ENCODE measurements at regions of chr6 and their contacts with region 1.

Region 1: GRCh38 chr6:139375232-139376016 is 976 bp upstream of the CITED2 start:
- DNase-seq: peak; percentile 95

Region 2: GRCh38 chr6:139323511-139324300 is 51.7 kb before region 1 on chr6:
- intact Hi-C with region 1: no loop called
- DNase-seq: peak; percentile 89

Region 3: DNA sequence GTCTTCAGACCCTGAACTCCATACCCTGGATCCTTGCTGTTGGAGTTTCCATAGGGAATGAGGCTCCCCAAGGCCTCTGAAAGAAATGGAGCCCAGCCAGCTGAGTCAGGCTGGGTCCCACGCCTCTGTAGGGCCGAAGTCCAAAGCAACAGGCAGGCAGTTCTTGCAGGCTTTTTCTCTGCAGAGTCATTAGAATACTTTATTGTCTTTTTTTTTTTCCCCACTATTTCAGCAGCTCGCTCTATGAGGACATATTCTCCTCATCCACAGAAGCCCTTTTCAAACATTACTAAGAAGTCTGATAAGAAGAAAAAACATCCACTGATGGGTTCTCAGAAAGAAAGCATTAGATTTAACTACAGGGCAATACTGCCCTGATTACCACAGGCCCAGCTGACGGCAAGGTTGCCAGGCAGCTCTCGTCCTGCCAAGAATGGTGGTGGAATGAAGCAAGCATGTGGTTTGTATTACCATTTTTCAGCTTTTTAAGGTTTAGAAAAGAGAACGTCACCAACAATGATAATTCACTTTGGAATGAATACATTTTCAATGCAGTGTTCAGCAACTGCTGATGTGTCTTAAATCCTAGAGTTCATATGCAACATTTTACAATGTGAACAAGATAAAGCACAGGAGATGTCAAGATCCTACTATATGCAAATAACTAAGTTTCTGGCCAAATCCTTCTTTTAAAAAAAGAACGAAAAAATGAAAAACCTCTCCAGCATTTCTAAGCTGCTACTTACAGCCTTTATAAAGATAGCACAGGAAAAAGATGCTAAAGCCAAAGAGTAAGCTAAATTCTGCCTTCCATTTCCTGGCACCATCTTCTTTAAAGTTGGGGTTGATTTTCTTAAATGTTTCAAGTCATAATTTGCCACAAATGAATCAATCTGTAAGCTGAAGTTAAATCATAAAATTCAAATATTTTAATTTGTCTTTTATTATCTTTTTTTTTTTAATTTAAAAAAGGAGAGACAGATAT is 222.6 kb after region 1 on chr6:
- intact Hi-C with region 1: loop called in 1 of 2 experiments (anchors 5 kb)
- DNase-seq: peak; percentile 92

Region 4: GRCh38 chr6:139973669-139974344 is 598.4 kb after region 1 on chr6:
- intact Hi-C with region 1: loop called in 1 of 2 experiments (anchors 5 kb)
- DNase-seq: no peak

Region 5: DNA sequence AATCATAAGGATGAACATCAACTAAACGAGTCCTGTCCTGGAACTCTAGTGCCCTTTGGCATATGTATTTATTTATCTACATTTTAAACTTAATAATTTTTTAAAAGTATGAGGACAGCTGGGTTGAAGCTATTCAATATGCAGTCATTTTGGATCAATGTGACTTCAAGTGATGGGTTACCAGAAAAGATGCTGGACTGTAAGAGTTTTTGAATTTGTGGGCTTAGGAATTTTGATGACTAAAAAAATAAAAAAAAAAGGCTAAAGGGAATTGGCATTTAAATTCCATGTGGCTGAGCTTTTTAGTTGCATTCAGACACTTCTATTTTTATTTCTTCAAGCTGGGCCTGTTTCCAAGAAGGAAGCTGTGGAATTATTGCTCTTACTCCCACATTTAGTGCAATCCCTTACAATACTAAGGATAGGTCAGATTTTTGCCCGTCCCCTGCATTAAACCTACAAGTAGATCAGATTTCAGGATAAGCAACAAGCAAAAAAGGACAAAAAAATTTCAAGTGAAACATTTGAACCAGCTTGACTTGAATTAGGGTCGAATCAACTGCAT is 703.2 kb after region 1 on chr6:
- intact Hi-C with region 1: loop called (anchors 10 kb)
- DNase-seq: no peak